ENCODE measurements at regions of chr6 and their contacts with region 1.

Region 1: DNA sequence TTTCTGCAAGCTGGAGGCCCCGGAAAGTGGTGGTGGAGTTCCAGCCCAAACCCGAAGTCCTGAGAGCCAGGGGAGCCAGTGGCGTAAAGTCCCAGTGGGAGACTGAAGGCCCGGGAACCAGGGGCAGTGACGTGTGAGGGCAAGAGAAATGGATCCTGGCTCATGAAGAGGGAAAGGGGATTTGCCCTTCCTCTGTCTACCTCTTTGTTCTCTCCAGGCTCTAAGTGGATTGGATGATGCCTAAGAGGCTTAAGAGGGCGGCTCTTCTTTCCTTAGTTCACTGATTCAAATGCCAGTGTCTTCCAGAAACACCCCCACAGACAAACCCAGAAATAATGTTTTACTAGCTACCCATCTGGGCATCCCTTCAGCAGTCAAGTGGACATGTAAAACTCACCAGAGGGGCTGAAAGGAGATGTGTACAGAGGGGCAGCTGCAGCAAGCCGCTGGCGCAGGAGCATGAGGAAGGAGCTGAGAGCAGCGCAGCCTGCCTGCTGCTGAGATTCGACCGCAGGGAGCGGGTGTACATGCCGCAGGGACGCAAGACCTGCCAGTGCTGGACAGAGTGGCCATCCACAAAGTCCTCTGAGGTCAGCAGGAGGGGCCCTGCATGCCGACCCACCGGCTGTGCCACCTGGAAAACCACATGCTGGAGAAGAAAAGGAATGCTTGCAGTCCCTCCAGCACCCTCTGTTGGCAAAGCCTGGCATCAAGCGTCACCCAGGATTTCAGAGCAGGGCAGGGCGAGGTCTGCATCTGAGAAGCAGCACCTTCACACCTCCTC is 29.5 kb downstream of the CDYL start:
- DNase-seq: peak; percentile 66
- ATAC-seq: peak; percentile 68
- H3K4me3 ChIP-seq: no peak overlapping the region
- H3K27ac ChIP-seq: no peak overlapping the region
- H3K4me1 ChIP-seq: peaks cover 19% of the 10 kb centered on the region
- H3K27me3 ChIP-seq: no peaks in the 10 kb centered on the region
- CTCF ChIP-seq: peak; percentile 82

Region 2: DNA sequence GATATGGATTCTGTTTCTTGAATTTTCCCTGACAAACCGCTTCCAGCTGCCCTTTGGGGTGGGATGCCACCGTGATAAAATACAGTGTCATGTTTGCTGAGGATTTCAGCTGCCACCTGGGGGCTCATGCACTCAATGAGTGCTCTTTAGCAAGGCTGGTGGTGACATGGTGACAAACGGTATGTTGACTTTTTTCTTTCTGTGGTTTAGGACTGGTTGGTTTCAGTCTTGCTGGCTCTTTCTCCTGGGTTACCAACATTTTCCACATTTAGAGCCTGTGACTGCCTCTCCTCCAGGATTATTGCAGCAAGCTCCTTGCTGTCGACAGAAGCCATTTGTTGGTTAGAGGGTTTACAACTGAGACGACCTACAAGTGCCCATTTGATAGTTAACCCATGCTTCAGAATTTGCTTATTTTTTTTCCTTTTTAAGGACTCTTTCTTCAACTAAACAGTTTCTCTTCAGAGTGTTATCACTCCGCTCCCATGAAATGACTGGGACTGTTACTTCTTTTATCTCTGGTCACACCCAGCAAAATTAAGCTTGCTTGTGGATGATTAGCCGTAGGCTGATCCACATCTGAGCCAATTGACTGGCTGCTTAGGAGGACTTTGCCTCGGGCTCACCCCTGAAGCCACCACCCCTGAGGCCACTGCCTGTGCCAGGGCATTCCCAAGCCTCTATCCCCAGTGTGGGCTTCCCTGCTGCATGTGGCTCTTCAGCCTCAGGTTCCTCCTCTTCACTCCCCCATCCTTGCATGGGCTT is 77.9 kb before region 1 on chr6:
- CTCF ChIA-PET with region 1: no interaction called
- POLR2A ChIA-PET with region 1: no interaction called
- intact Hi-C with region 1: no loop called
- DNase-seq: peak; percentile 28
- ATAC-seq: peak; percentile 29; the same call in 1 of the 2 replicates
- H3K4me3 ChIP-seq: no peak overlapping the region
- H3K27ac ChIP-seq: no peak overlapping the region
- H3K4me1 ChIP-seq: peaks cover 3% of the 10 kb centered on the region; the same call in 1 of the 2 replicates
- H3K27me3 ChIP-seq: no peaks in the 10 kb centered on the region
- CTCF ChIP-seq: peak; percentile 16; the same call in 1 of the 2 replicates

Region 3: GRCh38 chr6:4775584-4776494 is 29.9 kb before region 1 on chr6 and contains the start of gene CDYL:
- CTCF ChIA-PET with region 1: interaction called, 11 read pairs
- POLR2A ChIA-PET with region 1: no interaction called
- intact Hi-C with region 1: no loop called
- DNase-seq: peak; percentile 94
- ATAC-seq: peak; percentile 79
- H3K4me3 ChIP-seq: peak within 1 kb of the TSS; percentile 74
- H3K27ac ChIP-seq: peak within 1 kb of the TSS; percentile 39; the same call in 1 of the 2 replicates
- H3K4me1 ChIP-seq: peaks cover 5% of the 10 kb centered on the region; the same call in 1 of the 2 replicates
- H3K27me3 ChIP-seq: no peaks in the 10 kb centered on the region
- CTCF ChIP-seq: peak; percentile 29; the same call in 1 of the 2 replicates
- total RNA-seq, gene CDYL: 34.4 and 38.4 TPM in 2 replicates

Region 4: DNA sequence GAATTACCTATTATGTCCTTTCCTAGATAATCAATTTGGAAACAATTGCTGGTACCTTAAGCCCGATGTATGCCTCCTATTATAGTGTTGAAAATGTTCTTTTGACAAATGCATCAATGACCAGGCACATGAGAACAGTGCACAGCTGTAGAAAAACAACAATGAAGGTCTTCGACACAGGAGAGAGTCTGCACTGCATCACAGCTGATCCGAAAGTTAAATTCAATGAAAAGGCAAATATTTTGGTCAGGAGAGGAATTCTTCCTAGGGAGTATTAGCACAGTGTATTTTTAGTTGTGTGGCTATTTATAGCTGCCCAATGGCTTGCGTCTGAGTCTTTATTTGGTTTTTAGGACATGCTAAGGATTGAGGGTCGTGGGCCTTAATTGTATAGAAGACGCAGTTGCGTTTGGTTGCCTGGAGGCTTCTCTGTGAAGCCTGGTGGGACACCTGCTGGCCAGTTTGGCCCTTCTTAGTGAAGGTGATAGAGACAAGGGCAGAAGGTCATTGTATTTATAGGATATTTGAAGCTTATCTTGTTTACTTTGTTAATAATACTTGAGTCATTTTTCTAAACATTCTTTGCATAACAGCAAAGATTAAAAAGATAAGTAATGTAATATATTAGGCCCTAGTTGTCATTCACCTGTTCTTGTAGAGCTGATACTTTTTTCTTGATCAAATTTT is 42.8 kb after region 1 on chr6:
- CTCF ChIA-PET with region 1: no interaction called
- POLR2A ChIA-PET with region 1: no interaction called
- intact Hi-C with region 1: no loop called
- DNase-seq: peak; percentile 55
- ATAC-seq: peak; percentile 73
- H3K4me3 ChIP-seq: no peak overlapping the region
- H3K27ac ChIP-seq: no peak overlapping the region
- H3K4me1 ChIP-seq: peaks cover 17% of the 10 kb centered on the region
- H3K27me3 ChIP-seq: no peaks in the 10 kb centered on the region
- CTCF ChIP-seq: peak; percentile 77

Region 5: DNA sequence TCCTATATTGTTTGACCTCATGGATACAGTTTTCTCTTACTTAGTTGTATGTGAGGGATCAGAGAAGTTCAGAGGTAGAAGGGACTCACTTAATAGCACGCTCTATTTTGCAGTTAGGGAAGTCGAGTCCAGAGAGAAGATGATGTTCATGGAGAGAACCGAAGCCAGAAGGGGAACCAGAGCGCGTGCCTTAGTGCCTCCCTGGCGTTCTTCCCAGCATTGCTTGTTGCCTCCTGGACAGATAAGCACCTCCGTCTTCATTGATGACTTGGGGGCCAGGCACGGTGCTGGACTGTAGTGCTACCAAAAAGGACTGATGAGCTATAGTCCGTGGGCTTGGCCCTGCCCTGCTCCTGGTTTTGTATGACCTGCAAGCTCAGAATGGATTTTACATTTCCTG is 88.3 kb after region 1 on chr6:
- CTCF ChIA-PET with region 1: no interaction called
- POLR2A ChIA-PET with region 1: interaction called, 19 read pairs
- intact Hi-C with region 1: no loop called
- DNase-seq: no peak
- ATAC-seq: no peak
- H3K4me3 ChIP-seq: no peak overlapping the region
- H3K27ac ChIP-seq: no peak overlapping the region
- H3K4me1 ChIP-seq: no peaks in the 10 kb centered on the region
- H3K27me3 ChIP-seq: no peaks in the 10 kb centered on the region
- CTCF ChIP-seq: no peak

Region 6: GRCh38 chr6:4936681-4937041 is 130.9 kb after region 1 on chr6:
- CTCF ChIA-PET with region 1: no interaction called
- POLR2A ChIA-PET with region 1: no interaction called
- intact Hi-C with region 1: loop called (anchors 5 kb)
- DNase-seq: peak; percentile 58
- ATAC-seq: no peak
- H3K4me3 ChIP-seq: no peak overlapping the region
- H3K27ac ChIP-seq: no peak overlapping the region
- H3K4me1 ChIP-seq: peaks cover 22% of the 10 kb centered on the region
- H3K27me3 ChIP-seq: no peaks in the 10 kb centered on the region
- CTCF ChIP-seq: peak; percentile 81

Region 7: GRCh38 chr6:5030596-5031136 is 224.9 kb after region 1 on chr6:
- CTCF ChIA-PET with region 1: no interaction called
- POLR2A ChIA-PET with region 1: no interaction called
- intact Hi-C with region 1: loop called (anchors 2 kb)
- DNase-seq: peak; percentile 87
- ATAC-seq: peak; percentile 70
- H3K4me3 ChIP-seq: no peak overlapping the region
- H3K27ac ChIP-seq: no peak overlapping the region
- H3K4me1 ChIP-seq: peaks cover 18% of the 10 kb centered on the region
- H3K27me3 ChIP-seq: no peaks in the 10 kb centered on the region
- CTCF ChIP-seq: peak; percentile 85